ENCODE measurements at regions of chr20 and their contacts with region 1.

Region 1: GRCh38 chr20:56554869-56555268 is 21.8 kb downstream of the FAM209B start:
- DNase-seq: peak; percentile 77 to 92
- ATAC-seq: peak; percentile 88 to 91
- H3K4me3 ChIP-seq: no peak overlapping the region
- H3K27ac ChIP-seq: no peak overlapping the region; a peak in 1 of 6 replicates
- H3K4me1 ChIP-seq: peaks cover 19% of the 10 kb centered on the region
- CTCF ChIP-seq: no peak
- EP300 ChIP-seq: no peak
- POLR2A ChIP-seq: no peak
- RAD21 ChIP-seq: 0 out of 5 replicates have a peak, but pooled peaks of 1 of the 2 experiments have one; percentile 19

Region 2: GRCh38 chr20:56540420-56540819 is 14.4 kb before region 1 on chr20:
- CTCF ChIA-PET with region 1: interaction called, 61 read pairs
- POLR2A ChIA-PET with region 1: no interaction called
- DNase-seq: no peak
- ATAC-seq: peak in 1 of 2 experiments; percentile 54; a peak in 1 of 6 replicates
- H3K4me3 ChIP-seq: no peak overlapping the region
- H3K27ac ChIP-seq: no peak overlapping the region
- H3K4me1 ChIP-seq: no peaks in the 10 kb centered on the region
- CTCF ChIP-seq: no peak
- EP300 ChIP-seq: no peak
- POLR2A ChIP-seq: no peak
- RAD21 ChIP-seq: no peak

Region 3: GRCh38 chr20:56595746-56596478 is 41.0 kb after region 1 on chr20:
- CTCF ChIA-PET with region 1: interaction called, 11 read pairs
- POLR2A ChIA-PET with region 1: no interaction called
- DNase-seq: no peak
- ATAC-seq: no peak
- H3K4me3 ChIP-seq: no peak overlapping the region
- H3K27ac ChIP-seq: no peak overlapping the region
- H3K4me1 ChIP-seq: peaks cover 12% of the 10 kb centered on the region
- CTCF ChIP-seq: no peak
- EP300 ChIP-seq: no peak
- POLR2A ChIP-seq: no peak
- RAD21 ChIP-seq: no peak

Region 4: GRCh38 chr20:56843817-56844216 is 288.9 kb after region 1 on chr20:
- CTCF ChIA-PET with region 1: no interaction called
- POLR2A ChIA-PET with region 1: no interaction called
- DNase-seq: peak in 1 of 2 experiments; percentile 33
- ATAC-seq: peak in 1 of 2 experiments; percentile 74; a peak in 3 of 6 replicates
- H3K4me3 ChIP-seq: no peak overlapping the region
- H3K27ac ChIP-seq: no peak overlapping the region
- H3K4me1 ChIP-seq: no peaks in the 10 kb centered on the region
- CTCF ChIP-seq: no peak
- EP300 ChIP-seq: no peak
- POLR2A ChIP-seq: no peak
- RAD21 ChIP-seq: peak in 1 of 2 experiments; percentile 8; a peak in 1 of 5 replicates

Region 5: DNA sequence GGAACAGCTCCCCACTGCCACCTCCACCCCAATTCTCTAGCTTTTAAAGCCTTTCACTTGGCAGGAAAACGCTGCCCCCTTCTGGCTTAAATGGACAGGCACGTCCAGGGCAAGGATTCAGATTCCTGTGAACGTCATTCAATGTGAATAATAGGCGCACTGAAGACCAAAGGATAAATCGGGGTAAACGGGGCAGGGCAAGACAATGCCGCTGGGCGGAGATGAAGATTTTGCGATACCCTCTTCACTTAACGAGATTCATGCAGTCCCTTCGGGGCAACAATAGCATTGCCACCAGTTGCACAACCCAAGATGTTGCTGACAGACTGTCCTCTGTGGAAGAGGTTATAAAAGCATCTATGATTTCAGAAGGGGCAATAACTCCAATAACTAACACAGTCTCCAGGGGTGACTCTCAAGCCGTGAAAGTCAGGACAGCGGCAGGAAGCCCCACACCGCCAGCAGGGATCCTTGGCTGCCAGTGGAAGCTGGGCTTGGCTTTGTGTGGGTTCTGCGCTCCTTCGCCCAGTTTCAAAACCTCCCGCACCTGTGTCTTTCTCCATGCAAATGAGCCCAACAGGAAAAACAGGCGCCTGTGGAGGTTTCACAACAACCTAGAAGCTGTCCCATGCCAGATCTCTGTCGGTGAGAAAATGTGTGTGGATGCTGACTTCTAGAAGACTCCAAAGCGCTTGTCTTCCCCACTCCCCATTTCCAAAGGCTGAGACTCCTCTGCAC is 419.8 kb after region 1 on chr20:
- CTCF ChIA-PET with region 1: interaction called, 72 read pairs
- POLR2A ChIA-PET with region 1: interaction called, 3 read pairs
- DNase-seq: peak; percentile 64 to 81
- ATAC-seq: peak; percentile 87 to 91
- H3K4me3 ChIP-seq: no peak overlapping the region
- H3K27ac ChIP-seq: peak overlapping the region; percentile 47 to 66; a peak in 4 of 6 replicates
- H3K4me1 ChIP-seq: peaks cover 12% of the 10 kb centered on the region
- CTCF ChIP-seq: peak; percentile 88
- EP300 ChIP-seq: no peak
- POLR2A ChIP-seq: no peak
- RAD21 ChIP-seq: peak; percentile 95 to 98

Region 6: DNA sequence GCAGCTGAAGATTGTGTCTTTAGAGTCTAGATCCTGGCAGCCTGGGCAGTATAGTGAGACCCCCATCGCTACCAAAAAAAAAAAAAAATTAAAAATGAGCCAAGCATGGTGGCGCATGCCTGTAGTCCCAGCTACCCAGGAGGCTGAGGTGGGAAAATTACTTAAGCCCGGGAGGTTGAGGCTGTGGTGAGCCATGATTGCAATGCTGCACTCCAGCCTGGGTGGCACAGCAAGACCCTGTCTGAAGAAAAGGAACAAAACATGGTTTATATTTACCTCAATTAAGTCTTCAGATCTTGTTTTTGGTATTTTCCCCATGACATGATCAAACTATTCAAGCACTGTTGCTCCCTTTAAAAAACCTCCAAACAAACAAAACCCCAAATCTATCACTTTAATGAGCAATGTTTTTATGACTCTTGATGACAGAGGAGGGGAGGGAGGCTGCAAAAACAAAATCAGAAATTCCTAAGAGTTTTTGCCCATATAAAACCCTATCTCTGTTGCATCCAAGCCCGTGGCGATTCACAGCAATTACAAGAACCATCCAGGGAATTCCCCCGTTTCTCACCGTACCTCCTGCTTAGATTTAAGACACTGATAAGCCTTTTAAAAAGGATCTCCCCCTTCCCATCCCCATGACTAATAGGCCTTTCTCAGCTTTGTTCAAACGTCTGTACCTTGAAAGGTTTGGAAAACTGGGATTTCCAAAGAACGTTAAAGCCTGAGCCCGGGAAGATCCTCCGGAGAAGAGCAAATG is 451.7 kb after region 1 on chr20:
- CTCF ChIA-PET with region 1: interaction called, 13 read pairs
- POLR2A ChIA-PET with region 1: no interaction called
- DNase-seq: peak; percentile 31 to 42
- ATAC-seq: peak in 1 of 2 experiments; percentile 54; a peak in 4 of 6 replicates
- H3K4me3 ChIP-seq: no peak overlapping the region
- H3K27ac ChIP-seq: peak overlapping the region in 1 of 2 experiments; percentile 73; a peak in 3 of 6 replicates
- H3K4me1 ChIP-seq: peaks cover 30% of the 10 kb centered on the region
- CTCF ChIP-seq: no peak
- EP300 ChIP-seq: no peak
- POLR2A ChIP-seq: no peak
- RAD21 ChIP-seq: no peak

Region 7: DNA sequence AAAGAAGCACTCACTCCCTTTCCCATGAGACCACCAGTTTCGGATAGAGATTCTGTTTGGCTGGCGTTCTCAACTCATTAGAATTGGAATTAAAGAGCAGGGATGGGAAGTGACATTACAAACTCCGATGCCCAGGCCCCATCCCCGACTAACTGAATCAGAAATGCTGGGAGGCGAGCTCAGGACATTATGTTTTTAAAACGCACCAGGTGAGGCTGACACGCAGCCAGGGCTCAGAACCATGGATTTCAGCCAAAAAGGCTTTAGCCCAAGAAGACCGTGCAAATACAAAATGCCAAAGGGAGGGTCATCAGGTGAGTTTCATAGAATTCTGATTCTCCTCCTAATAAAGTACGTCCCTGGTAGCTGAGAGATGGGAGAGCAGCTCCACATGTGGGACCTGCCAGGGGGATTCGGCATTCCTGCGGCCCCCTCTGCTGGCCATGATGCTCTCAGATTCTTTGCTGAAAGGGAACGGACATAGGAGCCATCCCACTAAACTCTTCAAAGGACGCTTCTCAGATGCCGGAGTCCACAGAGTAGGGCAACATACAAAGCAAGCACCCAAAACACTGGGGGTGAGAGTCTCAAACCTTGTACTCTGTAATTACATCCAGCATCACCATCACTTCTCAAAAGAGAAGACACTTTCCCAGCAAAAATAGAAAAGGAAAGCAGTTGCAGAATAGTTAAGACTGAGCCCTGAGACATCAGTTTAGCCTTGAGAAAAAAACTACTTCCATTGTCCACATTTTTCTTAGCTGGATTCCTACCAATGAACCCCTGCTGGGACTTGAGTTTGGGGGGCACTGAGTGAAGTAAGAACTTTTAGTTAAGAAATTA is 506.4 kb after region 1 on chr20:
- CTCF ChIA-PET with region 1: interaction called, 70 read pairs
- POLR2A ChIA-PET with region 1: no interaction called
- DNase-seq: peak; percentile 47 to 67
- ATAC-seq: peak; percentile 64 to 94; a peak in 3 of 6 replicates
- H3K4me3 ChIP-seq: no peak overlapping the region
- H3K27ac ChIP-seq: no peak overlapping the region
- H3K4me1 ChIP-seq: 0 out of 3 replicates have a peak, but pooled peaks cover 4% of the 10 kb centered on the region
- CTCF ChIP-seq: peak; percentile 51
- EP300 ChIP-seq: no peak
- POLR2A ChIP-seq: no peak
- RAD21 ChIP-seq: peak; percentile 69 to 86

Measured in A549 (cell line).